ENCODE measurements at regions of chr20 and their contacts with region 1.

Region 1: GRCh38 chr20:52372169-52372568 is 180.6 kb upstream of the ZFP64 start:
- DNase-seq: no peak
- H3K4me3 ChIP-seq: no peak overlapping the region
- H3K27ac ChIP-seq: no peak overlapping the region
- H3K4me1 ChIP-seq: no peaks in the 10 kb centered on the region
- H3K27me3 ChIP-seq: no peaks in the 10 kb centered on the region
- CTCF ChIP-seq: no peak

Region 2: DNA sequence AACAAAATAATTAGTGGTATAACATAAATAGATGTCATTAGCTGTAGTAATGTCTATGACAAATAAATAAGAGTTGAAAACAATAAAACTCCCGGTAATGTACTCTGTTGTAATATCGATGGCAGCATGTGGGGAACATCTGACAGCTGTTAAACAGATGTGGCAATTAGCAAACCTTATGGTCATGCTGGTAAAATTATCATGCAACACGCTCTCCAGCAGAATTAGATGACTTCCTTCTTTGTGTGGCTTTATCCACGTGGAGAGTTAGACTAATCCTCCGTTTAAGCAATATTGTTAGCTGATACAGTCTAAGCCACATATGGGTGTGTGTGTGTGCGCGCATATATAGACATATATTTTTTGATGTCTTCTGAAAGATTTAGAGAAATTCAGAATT is 102.8 kb before region 1 on chr20:
- CTCF ChIA-PET with region 1: no interaction called
- dilution Hi-C with region 1: no loop called
- in situ Hi-C with region 1: no loop called
- intact Hi-C with region 1: no loop called
- DNase-seq: no peak
- H3K4me3 ChIP-seq: no peak overlapping the region
- H3K27ac ChIP-seq: no peak overlapping the region
- H3K4me1 ChIP-seq: no peaks in the 10 kb centered on the region
- H3K27me3 ChIP-seq: no peaks in the 10 kb centered on the region
- CTCF ChIP-seq: no peak

Region 3: DNA sequence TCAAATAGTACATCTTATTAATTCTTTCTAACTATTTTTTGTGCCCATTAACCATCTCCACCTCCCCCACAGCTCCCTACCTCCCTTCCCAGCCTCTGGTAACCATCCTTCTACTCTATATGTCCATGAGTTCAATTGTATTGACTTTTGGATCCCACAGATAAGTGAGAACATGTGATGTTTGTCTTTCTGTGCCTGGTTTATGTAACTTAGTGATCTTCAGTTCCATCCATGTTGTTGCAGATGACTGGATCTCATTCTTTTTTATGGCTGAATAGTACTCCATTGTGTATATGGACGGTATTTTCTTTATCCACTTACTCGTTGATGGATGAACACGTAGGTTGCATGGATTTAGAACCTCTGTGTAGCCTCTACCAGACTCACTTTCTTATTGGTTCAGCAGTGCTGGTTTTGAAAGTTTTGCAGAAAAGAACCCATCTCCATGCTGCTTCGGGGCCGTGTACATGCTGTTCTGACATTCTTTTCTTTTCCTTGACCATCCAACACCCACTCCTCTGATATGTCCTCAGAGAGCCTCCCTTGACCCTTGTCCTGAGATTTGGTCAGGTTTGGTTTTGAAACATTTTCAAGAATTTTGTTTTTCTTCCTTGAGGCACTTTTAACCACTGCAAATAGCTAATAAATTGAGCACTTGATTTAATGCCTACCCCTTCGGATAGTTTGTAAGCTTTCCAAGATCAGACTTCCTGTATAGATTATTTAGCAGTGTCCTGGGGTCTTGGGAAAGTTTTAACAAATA is 50.6 kb after region 1 on chr20:
- CTCF ChIA-PET with region 1: no interaction called
- dilution Hi-C with region 1: loop called (anchors 5 kb)
- in situ Hi-C with region 1: no loop called
- intact Hi-C with region 1: no loop called
- DNase-seq: no peak
- H3K4me3 ChIP-seq: no peak overlapping the region
- H3K27ac ChIP-seq: no peak overlapping the region
- H3K4me1 ChIP-seq: no peaks in the 10 kb centered on the region
- H3K27me3 ChIP-seq: no peaks in the 10 kb centered on the region
- CTCF ChIP-seq: no peak

Region 4: GRCh38 chr20:52473186-52473585 is 101.0 kb after region 1 on chr20:
- CTCF ChIA-PET with region 1: no interaction called
- dilution Hi-C with region 1: loop called (anchors 5 kb)
- in situ Hi-C with region 1: no loop called
- intact Hi-C with region 1: no loop called
- DNase-seq: no peak
- H3K4me3 ChIP-seq: no peak overlapping the region
- H3K27ac ChIP-seq: no peak overlapping the region
- H3K4me1 ChIP-seq: no peaks in the 10 kb centered on the region
- H3K27me3 ChIP-seq: no peaks in the 10 kb centered on the region
- CTCF ChIP-seq: no peak

Measured in mammary epithelial cell (primary cell).